ENCODE measurements at regions of chr5 and their contacts with region 1.

Region 1: DNA sequence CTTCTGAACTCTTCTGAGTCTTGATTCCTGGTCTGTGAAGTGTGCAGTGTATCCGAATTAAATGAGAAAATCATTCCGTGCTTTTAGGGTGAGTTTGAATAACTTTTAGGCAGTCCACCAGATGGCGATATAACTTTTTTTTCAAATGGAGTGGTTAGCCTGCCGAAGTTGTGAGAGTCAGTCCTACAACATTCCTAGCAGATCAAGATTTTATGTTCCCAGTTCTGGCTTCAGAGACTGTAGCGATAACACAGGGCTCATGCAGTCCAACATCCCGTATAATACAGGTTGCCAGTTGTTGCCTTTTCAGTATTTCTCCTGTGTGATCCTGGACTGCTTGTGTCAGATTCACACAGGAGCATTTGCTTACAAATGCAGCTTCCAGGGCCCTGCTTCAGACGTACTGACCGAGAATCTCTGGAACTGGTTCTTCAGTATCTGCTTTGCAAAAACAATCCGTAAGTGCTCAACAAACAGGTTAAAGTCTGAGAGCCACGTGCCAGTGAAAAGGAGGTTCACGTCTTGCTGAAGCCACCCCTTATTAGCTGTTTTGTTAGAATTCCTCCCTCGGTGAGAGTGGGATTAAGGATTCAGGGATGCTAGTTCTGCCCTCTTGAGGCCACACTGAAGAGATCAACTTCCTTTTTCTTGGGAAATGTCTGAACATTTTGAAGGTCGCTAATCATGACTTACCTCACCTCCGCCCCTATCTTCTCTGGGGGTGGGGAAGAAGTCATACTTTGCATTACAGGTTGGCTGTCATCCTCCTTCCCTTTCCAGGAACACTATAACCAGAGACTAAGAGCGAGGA is 22.8 kb downstream of the SMIM3 start:
- DNase-seq: peak; percentile 80
- H3K4me3 ChIP-seq: peak overlapping the region in 2 of 3 experiments; percentile 14 to 24
- H3K27ac ChIP-seq: no peak overlapping the region
- H3K4me1 ChIP-seq: no peaks in the 10 kb centered on the region
- H3K27me3 ChIP-seq: peaks cover 15 to 44% of the 10 kb centered on the region in 2 experiments
- CTCF ChIP-seq: peak; percentile 31 to 53
- POLR2A ChIP-seq: no peak

Region 2: DNA sequence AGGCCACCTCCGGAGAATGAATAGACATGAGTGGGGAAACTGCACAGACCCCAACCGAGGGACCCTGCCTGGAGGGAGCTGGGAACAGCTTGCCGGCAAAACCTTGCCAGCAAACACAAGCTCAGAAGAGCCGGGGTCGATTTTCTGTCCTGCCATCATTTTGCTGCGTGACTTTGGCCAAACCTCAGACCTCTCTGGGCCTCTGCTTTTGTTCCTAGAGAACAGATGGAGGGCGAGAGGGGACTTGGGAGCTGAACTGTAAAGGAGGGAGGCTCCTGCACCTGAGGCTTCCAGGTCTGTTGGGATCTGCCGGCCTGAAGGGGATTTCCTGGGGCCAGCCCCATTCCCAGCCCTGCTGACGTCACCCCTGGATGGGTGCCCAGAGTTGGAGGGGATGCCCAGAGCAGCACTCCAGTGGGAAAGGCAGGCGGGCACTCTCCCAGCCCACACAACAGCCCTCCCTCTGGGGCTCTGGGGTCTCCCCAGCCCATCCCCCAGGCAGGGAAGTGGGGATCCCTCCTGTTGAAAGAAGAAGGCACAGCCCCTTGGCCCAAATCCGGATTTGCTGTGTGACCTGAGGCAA is 201.3 kb before region 1 on chr5:
- CTCF ChIA-PET with region 1: no interaction called
- POLR2A ChIA-PET with region 1: no interaction called
- dilution Hi-C with region 1: no loop called
- intact Hi-C with region 1: no loop called
- DNase-seq: peak; percentile 93
- H3K4me3 ChIP-seq: peak overlapping the region in 1 of 3 experiments; percentile 14
- H3K27ac ChIP-seq: peak overlapping the region; percentile 34
- H3K4me1 ChIP-seq: peaks cover 34% of the 10 kb centered on the region
- H3K27me3 ChIP-seq: no peaks in the 10 kb centered on the region
- CTCF ChIP-seq: no peak
- POLR2A ChIP-seq: no peak

Region 3: GRCh38 chr5:150700594-150701293 is 100.6 kb before region 1 on chr5 and contains the start of gene RBM22:
- CTCF ChIA-PET with region 1: interaction called, 13 read pairs
- POLR2A ChIA-PET with region 1: no interaction called
- dilution Hi-C with region 1: no loop called
- intact Hi-C with region 1: no loop called
- DNase-seq: peak; percentile 92
- H3K4me3 ChIP-seq: peak within 1 kb of the TSS; percentile 45 to 98 (median 69)
- H3K27ac ChIP-seq: peak within 1 kb of the TSS; percentile 73
- H3K4me1 ChIP-seq: peaks cover 13% of the 10 kb centered on the region
- H3K27me3 ChIP-seq: peaks cover 3 to 6% of the 10 kb centered on the region in 2 experiments
- CTCF ChIP-seq: peak; percentile 40 to 78
- POLR2A ChIP-seq: peak; percentile 93
- total RNA-seq, gene RBM22: 44.4 and 51.2 TPM in 2 replicates

Region 4: DNA sequence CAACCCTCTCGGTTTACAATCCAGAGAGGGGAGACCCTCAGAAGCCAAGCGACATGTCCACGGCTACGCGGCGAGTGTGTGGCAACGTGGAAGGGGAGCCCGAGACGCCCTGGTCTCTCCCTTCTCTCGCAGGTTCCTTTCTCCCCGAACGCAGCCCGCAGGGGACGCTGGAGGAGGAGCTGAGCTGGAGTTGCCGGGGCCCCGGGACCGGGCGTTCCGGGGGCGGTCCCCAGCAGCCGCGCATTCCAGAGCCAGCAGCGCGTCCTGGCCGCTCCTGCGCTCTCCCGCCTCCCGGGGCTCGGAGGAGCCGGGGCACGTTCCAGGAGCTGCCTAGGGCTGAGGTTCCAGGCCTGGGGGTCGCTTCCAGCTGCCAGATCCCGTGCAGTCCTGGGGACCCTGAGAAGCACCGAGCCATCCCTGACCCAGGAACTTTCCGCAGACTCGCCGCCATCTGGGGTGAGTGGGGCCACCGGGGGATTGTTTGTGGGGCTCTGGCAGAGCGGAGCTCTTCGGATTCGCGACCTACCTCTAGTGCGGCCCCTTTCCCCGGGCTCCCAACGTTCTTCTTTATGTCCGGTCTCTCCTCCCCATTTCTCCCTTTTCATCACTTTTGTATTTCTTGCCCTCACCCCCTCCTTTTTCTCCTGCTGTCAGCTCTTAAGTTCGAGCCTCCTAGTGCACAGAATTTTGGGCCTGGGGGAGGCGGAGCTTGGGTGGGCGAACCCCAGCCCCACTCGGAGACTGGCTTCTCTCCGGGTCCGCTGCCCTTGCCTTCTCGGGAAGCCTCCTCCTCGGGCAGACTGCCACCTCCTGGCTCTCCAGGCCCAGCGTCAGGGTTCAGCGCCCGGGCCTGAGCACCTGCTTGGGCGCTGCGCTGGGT is 22.6 kb before region 1 on chr5 and contains the start of gene SMIM3:
- CTCF ChIA-PET with region 1: interaction called, 36 read pairs
- POLR2A ChIA-PET with region 1: no interaction called
- dilution Hi-C with region 1: no loop called
- intact Hi-C with region 1: no loop called
- DNase-seq: peak; percentile 58
- H3K4me3 ChIP-seq: peak within 1 kb of the TSS; percentile 7 to 41 (median 40)
- H3K27ac ChIP-seq: no peak within 1 kb of the TSS
- H3K4me1 ChIP-seq: peaks cover 30% of the 10 kb centered on the region
- H3K27me3 ChIP-seq: peaks cover 30 to 43% of the 10 kb centered on the region in 2 experiments
- CTCF ChIP-seq: peak; percentile 20 to 56
- POLR2A ChIP-seq: no peak
- total RNA-seq, gene SMIM3: 0.97 and 1.0 TPM in 2 replicates

Region 5: DNA sequence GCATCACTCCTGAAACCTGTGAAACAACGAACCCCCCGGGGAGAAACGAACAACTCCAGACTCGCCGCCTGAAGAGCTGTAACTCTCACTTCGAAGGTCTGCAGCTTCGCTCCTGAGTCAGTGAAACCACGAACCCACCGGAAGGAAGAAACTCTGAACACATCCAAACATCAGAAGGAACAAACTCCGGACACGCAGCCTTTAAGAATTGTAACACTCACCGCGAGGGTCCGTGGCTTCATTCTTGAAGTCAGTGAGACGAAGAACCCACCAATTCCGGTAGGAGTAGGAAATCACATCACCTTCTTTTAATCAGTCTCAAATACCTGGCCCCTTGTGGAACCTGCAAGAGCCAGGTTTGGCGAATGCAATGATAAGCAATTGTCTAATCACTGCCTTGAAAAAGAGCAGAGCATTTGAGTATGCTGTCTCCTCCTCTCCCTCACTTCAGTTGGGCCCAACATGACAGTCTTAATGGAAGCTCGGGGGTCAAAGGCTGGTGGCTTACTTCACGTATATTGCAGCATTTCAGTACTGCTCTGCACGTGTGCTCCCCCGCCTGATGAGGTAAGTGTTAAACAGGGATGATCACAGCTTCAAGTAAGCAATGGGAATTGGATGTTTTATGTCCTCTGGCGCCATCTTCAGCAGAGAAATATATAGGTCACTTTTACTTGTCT is 45.5 kb after region 1 on chr5:
- CTCF ChIA-PET with region 1: interaction called, 86 read pairs
- POLR2A ChIA-PET with region 1: no interaction called
- dilution Hi-C with region 1: no loop called
- intact Hi-C with region 1: loop called (anchors 5 kb)
- DNase-seq: peak; percentile 86
- H3K4me3 ChIP-seq: no peak overlapping the region
- H3K27ac ChIP-seq: no peak overlapping the region
- H3K4me1 ChIP-seq: no peaks in the 10 kb centered on the region
- H3K27me3 ChIP-seq: peaks cover 3 to 6% of the 10 kb centered on the region in 2 experiments
- CTCF ChIP-seq: peak; percentile 20 to 41
- POLR2A ChIP-seq: no peak

Region 6: GRCh38 chr5:150978590-150978989 is 177.3 kb after region 1 on chr5:
- CTCF ChIA-PET with region 1: no interaction called
- POLR2A ChIA-PET with region 1: no interaction called
- dilution Hi-C with region 1: no loop called
- intact Hi-C with region 1: no loop called
- DNase-seq: no peak
- H3K4me3 ChIP-seq: no peak overlapping the region
- H3K27ac ChIP-seq: no peak overlapping the region
- H3K4me1 ChIP-seq: no peaks in the 10 kb centered on the region
- H3K27me3 ChIP-seq: no peaks in the 10 kb centered on the region
- CTCF ChIP-seq: no peak
- POLR2A ChIP-seq: no peak

Region 7: DNA sequence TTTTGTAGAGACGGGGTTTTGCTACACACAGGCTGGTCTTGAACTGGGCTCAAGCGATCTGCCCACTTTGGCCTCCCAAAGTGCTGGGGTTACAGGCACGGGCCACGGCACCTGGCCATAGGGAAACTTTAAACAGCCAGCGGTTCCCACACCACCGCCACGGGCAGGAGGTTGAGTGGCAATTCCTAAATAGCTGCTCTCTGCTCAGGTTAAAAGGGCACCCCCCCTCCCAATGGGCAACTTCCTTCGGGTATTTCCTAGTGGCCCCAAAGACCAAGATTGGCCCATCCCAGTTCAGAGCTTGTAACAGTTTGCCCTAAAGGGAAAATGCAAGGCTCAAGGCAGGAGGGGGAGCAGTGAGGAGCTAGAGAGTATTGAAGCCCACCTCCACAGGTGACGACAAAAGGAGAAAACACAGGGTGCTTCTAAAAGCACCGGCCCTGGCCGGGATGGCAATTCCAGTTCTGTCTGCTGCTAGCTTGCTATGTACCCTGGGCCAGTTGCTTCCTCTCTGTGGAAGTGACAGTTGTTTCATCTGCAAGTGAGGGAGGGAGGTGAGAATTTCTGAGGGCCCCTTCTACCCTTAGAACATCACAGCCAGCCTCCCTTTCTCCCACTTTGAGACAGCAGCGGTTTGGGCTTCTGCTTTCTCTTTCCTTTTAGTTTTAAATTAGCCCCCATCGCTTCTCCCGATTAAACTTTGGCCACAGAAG is 296.6 kb after region 1 on chr5:
- CTCF ChIA-PET with region 1: no interaction called
- POLR2A ChIA-PET with region 1: no interaction called
- dilution Hi-C with region 1: no loop called
- intact Hi-C with region 1: no loop called
- DNase-seq: no peak
- H3K4me3 ChIP-seq: no peak overlapping the region
- H3K27ac ChIP-seq: no peak overlapping the region
- H3K4me1 ChIP-seq: peaks cover 30% of the 10 kb centered on the region
- H3K27me3 ChIP-seq: no peaks in the 10 kb centered on the region
- CTCF ChIP-seq: no peak
- POLR2A ChIP-seq: no peak

Region 8: DNA sequence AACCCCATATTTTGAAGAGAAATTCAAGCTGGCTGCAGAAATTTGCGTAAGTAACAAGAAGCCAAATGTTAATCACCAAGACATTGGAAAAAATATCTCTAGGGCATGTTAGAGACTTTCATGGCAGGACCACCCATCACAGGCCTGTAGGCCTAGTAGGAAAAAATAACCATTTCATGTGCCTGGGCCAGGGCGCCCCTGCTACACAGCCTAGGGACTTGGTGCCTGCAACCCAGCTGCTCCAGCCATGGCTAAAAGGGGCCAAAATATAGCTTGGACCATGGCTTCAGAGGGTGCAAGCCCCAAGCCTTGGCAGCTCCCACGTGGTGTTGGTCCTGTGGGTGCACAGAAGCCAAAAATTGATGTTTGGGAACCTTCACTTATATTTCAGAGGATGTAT is 1771.5 kb after region 1 on chr5:
- CTCF ChIA-PET with region 1: no interaction called
- POLR2A ChIA-PET with region 1: no interaction called
- dilution Hi-C with region 1: no loop called
- intact Hi-C with region 1: no loop called
- DNase-seq: no peak
- H3K4me3 ChIP-seq: no peak overlapping the region
- H3K27ac ChIP-seq: no peak overlapping the region
- H3K4me1 ChIP-seq: no peaks in the 10 kb centered on the region
- H3K27me3 ChIP-seq: no peaks in the 10 kb centered on the region
- CTCF ChIP-seq: no peak
- POLR2A ChIP-seq: no peak